ENCODE measurements at regions of chr4 and their contacts with region 1.

Region 1: GRCh38 chr4:127632420-127633403 is at the start of gene INTU:
- DNase-seq: peak; percentile 97
- H3K4me3 Mint-ChIP-seq: peak within 1 kb of the TSS; percentile 96
- H3K27ac Mint-ChIP-seq: peak within 1 kb of the TSS; percentile 97
- H3K4me1 Mint-ChIP-seq: peaks cover 7% of the 10 kb centered on the region
- H3K27me3 Mint-ChIP-seq: no peaks in the 10 kb centered on the region
- CTCF ChIP-seq: no peak
- total RNA-seq, gene INTU: 5.9 and 9.2 TPM in 2 replicates

Region 2: DNA sequence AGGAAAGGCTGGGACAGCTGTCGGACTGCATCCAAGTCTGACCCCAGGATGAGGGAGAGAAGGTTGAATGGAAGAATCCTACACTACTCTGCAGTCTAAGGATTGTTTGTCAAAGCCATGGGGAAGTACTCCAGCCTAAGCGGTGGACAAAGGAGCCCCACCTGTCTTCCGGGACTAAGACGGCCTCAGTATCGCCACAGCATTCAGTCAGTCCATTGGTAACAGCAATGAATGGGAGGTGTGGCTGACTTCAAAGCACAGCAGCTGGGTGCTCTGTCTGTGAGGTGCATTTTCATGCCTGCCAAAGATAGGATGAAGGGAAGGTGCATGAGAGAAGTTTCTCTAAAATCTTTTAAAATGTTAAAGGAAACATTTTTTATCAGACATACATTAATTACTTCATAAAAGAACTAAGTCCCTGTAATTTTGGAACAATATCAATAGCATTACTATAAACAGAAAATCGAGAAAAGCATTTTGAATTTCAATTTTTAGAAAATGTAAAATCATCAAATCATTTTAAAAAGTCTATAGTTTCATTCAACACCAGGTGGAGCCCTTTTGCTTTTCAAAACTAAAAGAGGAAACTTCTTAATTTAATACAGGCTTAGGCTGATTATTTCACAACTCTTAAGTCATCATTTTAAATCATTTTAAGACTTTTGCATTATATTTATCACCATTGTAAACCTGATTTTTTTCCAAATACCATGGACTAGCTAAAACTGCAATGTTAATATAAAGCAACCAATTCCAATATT is 27.6 kb before region 1 on chr4:
- CTCF ChIA-PET with region 1: interaction called, 4 read pairs
- POLR2A ChIA-PET with region 1: interaction called, 22 read pairs
- intact Hi-C with region 1: no loop called
- DNase-seq: peak; percentile 56
- H3K4me3 Mint-ChIP-seq: no peak overlapping the region
- H3K27ac Mint-ChIP-seq: no peak overlapping the region
- H3K4me1 Mint-ChIP-seq: peaks cover 8% of the 10 kb centered on the region
- H3K27me3 Mint-ChIP-seq: peaks cover 14% of the 10 kb centered on the region
- CTCF ChIP-seq: peak; percentile 41

Region 3: GRCh38 chr4:127685292-127685691 is 52.6 kb after region 1 on chr4:
- CTCF ChIA-PET with region 1: interaction called, 3 read pairs
- POLR2A ChIA-PET with region 1: interaction called, 16 read pairs
- intact Hi-C with region 1: no loop called
- DNase-seq: no peak
- H3K4me3 Mint-ChIP-seq: no peak overlapping the region
- H3K27ac Mint-ChIP-seq: no peak overlapping the region
- H3K4me1 Mint-ChIP-seq: peaks cover 17% of the 10 kb centered on the region
- H3K27me3 Mint-ChIP-seq: no peaks in the 10 kb centered on the region
- CTCF ChIP-seq: no peak

Region 4: DNA sequence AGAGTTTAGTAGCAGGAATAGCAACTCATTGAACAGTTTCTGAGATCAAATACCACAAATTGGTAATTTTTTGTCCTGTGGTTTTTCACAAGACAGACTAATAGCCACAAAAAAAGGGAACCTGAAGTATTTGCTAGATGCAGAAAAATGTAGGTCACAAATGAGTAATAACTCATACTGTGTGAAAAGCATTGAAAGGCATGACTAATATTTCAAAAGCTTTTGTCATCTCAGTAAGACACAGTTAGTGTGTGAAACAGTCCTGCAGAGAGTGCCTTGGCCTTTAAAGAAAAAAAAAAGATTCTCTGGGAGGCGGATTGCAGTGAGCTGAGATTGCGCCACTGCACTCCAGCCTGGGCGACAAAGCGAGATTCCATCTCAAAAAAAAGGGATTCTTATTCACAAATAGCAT is 66.1 kb after region 1 on chr4:
- CTCF ChIA-PET with region 1: interaction called, 3 read pairs
- POLR2A ChIA-PET with region 1: interaction called, 21 read pairs
- intact Hi-C with region 1: loop called (anchors 5 kb)
- DNase-seq: peak; percentile 84
- H3K4me3 Mint-ChIP-seq: peak overlapping the region; percentile 59
- H3K27ac Mint-ChIP-seq: no peak overlapping the region
- H3K4me1 Mint-ChIP-seq: peaks cover 5% of the 10 kb centered on the region
- H3K27me3 Mint-ChIP-seq: no peaks in the 10 kb centered on the region
- CTCF ChIP-seq: no peak

Region 5: GRCh38 chr4:127708985-127709384 is 76.3 kb after region 1 on chr4:
- CTCF ChIA-PET with region 1: no interaction called
- POLR2A ChIA-PET with region 1: interaction called, 32 read pairs
- intact Hi-C with region 1: no loop called
- DNase-seq: peak; percentile 94
- H3K4me3 Mint-ChIP-seq: peak overlapping the region; percentile 49
- H3K27ac Mint-ChIP-seq: peak overlapping the region; percentile 78
- H3K4me1 Mint-ChIP-seq: peaks cover 15% of the 10 kb centered on the region
- H3K27me3 Mint-ChIP-seq: no peaks in the 10 kb centered on the region
- CTCF ChIP-seq: no peak

Region 6: DNA sequence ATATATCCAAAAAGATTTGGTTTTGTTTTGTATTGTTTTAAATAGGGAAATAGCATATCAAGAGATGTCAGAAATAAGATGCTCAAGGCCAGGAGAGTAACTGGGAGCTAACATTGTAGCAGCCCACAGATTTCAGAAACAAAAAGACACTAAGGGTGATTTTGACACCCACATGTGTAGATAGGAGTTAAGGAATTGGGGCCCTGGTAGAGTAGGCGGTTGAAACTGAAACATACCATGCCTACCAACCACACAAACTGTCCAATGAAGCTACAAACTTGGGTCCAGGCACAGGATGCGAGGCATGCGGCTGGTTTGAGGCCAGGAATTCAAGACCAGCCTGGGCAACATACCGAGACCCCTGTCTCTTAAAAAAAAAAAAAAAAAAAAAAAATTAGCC is 143.1 kb after region 1 on chr4:
- CTCF ChIA-PET with region 1: no interaction called
- POLR2A ChIA-PET with region 1: no interaction called
- intact Hi-C with region 1: no loop called
- DNase-seq: no peak
- H3K4me3 Mint-ChIP-seq: no peak overlapping the region
- H3K27ac Mint-ChIP-seq: no peak overlapping the region
- H3K4me1 Mint-ChIP-seq: peaks cover 12% of the 10 kb centered on the region
- H3K27me3 Mint-ChIP-seq: no peaks in the 10 kb centered on the region
- CTCF ChIP-seq: no peak

Region 7: GRCh38 chr4:129335276-129335675 is 1702.6 kb after region 1 on chr4:
- CTCF ChIA-PET with region 1: no interaction called
- POLR2A ChIA-PET with region 1: no interaction called
- intact Hi-C with region 1: no loop called
- DNase-seq: no peak
- H3K4me3 Mint-ChIP-seq: no peak overlapping the region
- H3K27ac Mint-ChIP-seq: no peak overlapping the region
- H3K4me1 Mint-ChIP-seq: no peaks in the 10 kb centered on the region
- H3K27me3 Mint-ChIP-seq: no peaks in the 10 kb centered on the region
- CTCF ChIP-seq: no peak

Measured in MCF 10A (cell line).